ENCODE measurements at regions of chr19 and their contacts with region 1.

Region 1: GRCh38 chr19:39435499-39436349 is at the start of gene RPS16:
- DNase-seq: peak; percentile 95 to 100
- ATAC-seq: peak; percentile 80 to 88
- H3K4me3 ChIP-seq: peak within 1 kb of the TSS; percentile 80
- H3K27ac ChIP-seq: peak within 1 kb of the TSS; percentile 90 to 95
- H3K4me1 ChIP-seq: peaks cover 71% of the 10 kb centered on the region
- CTCF ChIP-seq: no peak
- EP300 ChIP-seq: no peak
- POLR2A ChIP-seq: peak; percentile 92
- RAD21 ChIP-seq: no peak
- polyA plus RNA-seq, gene RPS16: 4,855 and 5,722 TPM in 2 replicates

Region 2: GRCh38 chr19:39341719-39342604 is 93.8 kb before region 1 on chr19 and contains the start of gene SAMD4B:
- CTCF ChIA-PET with region 1: interaction called, 4 read pairs
- POLR2A ChIA-PET with region 1: interaction called, 15 read pairs
- DNase-seq: peak; percentile 99 to 100
- ATAC-seq: peak; percentile 90 to 97
- H3K4me3 ChIP-seq: peak within 1 kb of the TSS; percentile 90
- H3K27ac ChIP-seq: peak within 1 kb of the TSS; percentile 85 to 94
- H3K4me1 ChIP-seq: peaks cover 22% of the 10 kb centered on the region
- CTCF ChIP-seq: peak; percentile 96
- EP300 ChIP-seq: peak in 1 of 2 experiments; percentile 9; a peak in 1 of 5 replicates
- POLR2A ChIP-seq: peak; percentile 97
- RAD21 ChIP-seq: peak; percentile 31 to 60; a peak in 4 of 5 replicates
- polyA plus RNA-seq, gene SAMD4B: 82.1 and 101 TPM in 2 replicates

Region 3: GRCh38 chr19:39412100-39412866 is 23.4 kb before region 1 on chr19 and contains the start of gene PLEKHG2:
- CTCF ChIA-PET with region 1: interaction called, 457 read pairs
- POLR2A ChIA-PET with region 1: interaction called, 140 read pairs
- DNase-seq: peak; percentile 100
- ATAC-seq: peak; percentile 40 to 66
- H3K4me3 ChIP-seq: peak within 1 kb of the TSS; percentile 76
- H3K27ac ChIP-seq: peak within 1 kb of the TSS; percentile 94 to 99
- H3K4me1 ChIP-seq: peaks cover 43% of the 10 kb centered on the region
- CTCF ChIP-seq: peak; percentile 99
- EP300 ChIP-seq: peak in 1 of 2 experiments; percentile 61; a peak in 1 of 5 replicates
- POLR2A ChIP-seq: peak; percentile 64
- RAD21 ChIP-seq: peak; percentile 55 to 82
- polyA plus RNA-seq, gene PLEKHG2: 21.6 and 35.1 TPM in 2 replicates

Region 4: GRCh38 chr19:39474139-39474622 is 38.5 kb after region 1 on chr19:
- CTCF ChIA-PET with region 1: interaction called, 73 read pairs
- POLR2A ChIA-PET with region 1: interaction called, 13 read pairs
- DNase-seq: peak; percentile 64 to 89
- ATAC-seq: peak; percentile 58 to 87; a peak in 5 of 6 replicates
- H3K4me3 ChIP-seq: no peak overlapping the region
- H3K27ac ChIP-seq: no peak overlapping the region
- H3K4me1 ChIP-seq: peaks cover 13% of the 10 kb centered on the region
- CTCF ChIP-seq: peak; percentile 97
- EP300 ChIP-seq: no peak
- POLR2A ChIP-seq: no peak
- RAD21 ChIP-seq: peak; percentile 61 to 69; a peak in 4 of 5 replicates

Region 5: DNA sequence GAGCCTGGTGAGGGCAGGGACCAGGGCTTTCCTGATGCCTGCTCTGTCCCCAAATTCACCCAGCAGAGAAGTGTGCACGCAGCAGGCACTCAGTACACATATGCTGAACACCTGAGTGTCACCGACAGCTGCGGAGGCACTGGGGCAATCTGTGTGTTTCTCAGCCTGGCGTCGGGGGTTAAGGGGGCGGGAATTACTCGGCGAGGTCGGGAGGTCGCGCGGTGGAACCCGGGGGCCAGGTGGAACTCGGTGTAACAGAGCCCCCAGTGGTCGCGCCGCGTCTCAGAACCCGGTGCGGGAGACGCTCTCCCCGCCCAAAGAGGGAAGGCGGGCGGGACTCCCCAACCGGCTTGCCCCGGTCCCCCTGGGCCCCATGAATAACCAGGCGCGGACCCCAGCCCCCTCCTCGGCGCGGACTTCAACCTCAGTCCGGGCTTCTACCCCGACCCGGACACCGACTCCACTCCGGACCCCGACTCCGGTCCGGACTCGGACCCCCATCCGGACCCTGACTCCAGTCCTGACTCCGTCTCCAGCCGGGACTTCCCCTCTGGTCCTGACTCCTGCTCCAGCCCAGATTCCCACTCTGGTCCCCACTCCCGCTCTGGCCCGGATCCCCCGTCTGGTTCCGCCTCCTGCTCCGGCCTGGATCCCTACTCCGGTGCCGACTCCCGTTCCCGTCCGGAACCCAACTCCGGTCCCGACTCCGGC is 79.3 kb after region 1 on chr19 and contains the start of gene SELENOV:
- CTCF ChIA-PET with region 1: interaction called, 11 read pairs
- POLR2A ChIA-PET with region 1: interaction called, 11 read pairs
- DNase-seq: no peak
- ATAC-seq: peak; percentile 48 to 64
- H3K4me3 ChIP-seq: peak within 1 kb of the TSS; percentile 42
- H3K27ac ChIP-seq: peak within 1 kb of the TSS in 1 of 2 experiments; percentile 66; a peak in 3 of 6 replicates
- H3K4me1 ChIP-seq: peaks cover 9% of the 10 kb centered on the region; the same call in 2 of the 3 replicates
- CTCF ChIP-seq: 0 out of 3 replicates have a peak, but pooled peaks have one; percentile 6
- EP300 ChIP-seq: no peak
- POLR2A ChIP-seq: no peak
- RAD21 ChIP-seq: 0 out of 5 replicates have a peak, but pooled peaks of 1 of the 2 experiments have one; percentile 10
- polyA plus RNA-seq, gene SELENOV: not detected in 2 replicates

Region 6: GRCh38 chr19:39546599-39546998 is 110.9 kb after region 1 on chr19:
- CTCF ChIA-PET with region 1: interaction called, 105 read pairs
- POLR2A ChIA-PET with region 1: interaction called, 8 read pairs
- DNase-seq: peak in 1 of 2 experiments; percentile 45
- ATAC-seq: peak in 1 of 2 experiments; percentile 17; a peak in 2 of 6 replicates
- H3K4me3 ChIP-seq: no peak overlapping the region
- H3K27ac ChIP-seq: no peak overlapping the region
- H3K4me1 ChIP-seq: no peaks in the 10 kb centered on the region
- CTCF ChIP-seq: no peak
- EP300 ChIP-seq: no peak
- POLR2A ChIP-seq: no peak
- RAD21 ChIP-seq: no peak

Measured in A549 (cell line).